ENCODE measurements at regions of chr17 and their contacts with region 1.

Region 1: GRCh38 chr17:46154151-46154816 is 38.9 kb downstream of the KANSL1 start:
- DNase-seq: peak; percentile 46
- H3K4me3 ChIP-seq: peak overlapping the region; percentile 53
- H3K27ac ChIP-seq: peak overlapping the region; percentile 89
- H3K4me1 ChIP-seq: peaks cover 98% of the 10 kb centered on the region
- CTCF ChIP-seq: no peak

Region 2: GRCh38 chr17:46020023-46020761 is 134.1 kb before region 1 on chr17:
- CTCF ChIA-PET with region 1: no interaction called
- POLR2A ChIA-PET with region 1: no interaction called
- intact Hi-C with region 1: no loop called
- DNase-seq: no peak
- H3K4me3 ChIP-seq: no peak overlapping the region
- H3K27ac ChIP-seq: no peak overlapping the region
- H3K4me1 ChIP-seq: no peaks in the 10 kb centered on the region
- CTCF ChIP-seq: no peak

Region 3: DNA sequence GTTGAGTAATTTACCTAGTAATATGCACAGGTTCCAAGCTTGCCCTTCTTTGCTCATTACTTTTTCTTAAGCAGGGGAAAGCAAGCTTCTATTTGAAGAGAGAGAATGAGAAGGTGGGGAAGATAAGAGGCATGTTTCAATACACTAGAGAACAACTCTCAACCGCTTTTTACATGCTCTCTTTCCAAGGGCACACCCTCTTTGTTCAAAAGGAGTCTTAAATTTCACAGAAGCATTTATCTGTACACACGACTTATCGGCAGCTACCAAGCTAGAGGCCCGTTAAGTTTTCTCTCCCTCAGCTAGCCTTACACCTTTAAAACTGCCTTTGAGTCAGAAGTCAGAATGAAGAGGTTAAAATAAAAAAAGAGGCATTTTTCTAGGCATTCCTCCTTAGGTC is 75.6 kb before region 1 on chr17:
- CTCF ChIA-PET with region 1: no interaction called
- POLR2A ChIA-PET with region 1: no interaction called
- intact Hi-C with region 1: no loop called
- DNase-seq: no peak
- H3K4me3 ChIP-seq: no peak overlapping the region
- H3K27ac ChIP-seq: no peak overlapping the region
- H3K4me1 ChIP-seq: no peaks in the 10 kb centered on the region
- CTCF ChIP-seq: no peak

Region 4: GRCh38 chr17:46139432-46140210 is 14.7 kb before region 1 on chr17:
- CTCF ChIA-PET with region 1: interaction called, 5 read pairs
- POLR2A ChIA-PET with region 1: interaction called, 61 read pairs
- intact Hi-C with region 1: no loop called
- DNase-seq: peak; percentile 76
- H3K4me3 ChIP-seq: peak overlapping the region; percentile 62
- H3K27ac ChIP-seq: peak overlapping the region; percentile 87
- H3K4me1 ChIP-seq: peaks cover 94% of the 10 kb centered on the region
- CTCF ChIP-seq: no peak

Region 5: GRCh38 chr17:46167826-46168569 is 13.7 kb after region 1 on chr17:
- CTCF ChIA-PET with region 1: no interaction called
- POLR2A ChIA-PET with region 1: interaction called, 10 read pairs
- intact Hi-C with region 1: loop called (anchors 2 kb)
- DNase-seq: no peak
- H3K4me3 ChIP-seq: no peak overlapping the region
- H3K27ac ChIP-seq: no peak overlapping the region
- H3K4me1 ChIP-seq: peaks cover 43% of the 10 kb centered on the region
- CTCF ChIP-seq: no peak